Activated CD4-positive, alpha-beta T cell treated with anti-CD3 and anti-CD28 coated beads for 36 hours (primary cell): ENCODE measurements at regions of chrX and their contacts with region 1.

Region 1: DNA sequence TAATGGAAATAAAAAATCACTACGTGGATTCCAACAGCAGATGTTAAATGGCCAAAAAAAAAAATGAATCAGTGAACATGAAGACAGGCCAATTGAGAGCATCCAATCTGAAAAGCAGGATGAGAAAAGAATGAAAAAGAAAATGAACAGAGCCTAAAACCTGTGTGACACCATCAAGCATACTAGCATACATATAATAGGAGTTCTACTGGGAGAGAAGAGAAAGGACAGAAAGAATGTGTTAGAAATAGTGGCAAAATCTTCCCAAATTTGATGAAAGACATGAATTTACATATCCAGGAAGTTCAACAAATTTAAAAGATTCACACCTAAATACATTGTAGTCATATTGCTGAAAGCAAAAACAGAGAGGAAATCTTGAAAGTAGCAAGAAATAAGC is 76.4 kb downstream of the CCDC160 start:
- DNase-seq: no peak
- ATAC-seq: no peak
- H3K4me3 Mint-ChIP-seq: no peak overlapping the region
- H3K27ac Mint-ChIP-seq: no peak overlapping the region
- H3K4me1 Mint-ChIP-seq: no peaks in the 10 kb centered on the region
- H3K27me3 Mint-ChIP-seq: no peaks in the 10 kb centered on the region

Region 2: GRCh38 chrX:134246282-134246681 is 67.1 kb before region 1 on chrX:
- CTCF ChIA-PET with region 1: no interaction called
- POLR2A ChIA-PET with region 1: no interaction called
- intact Hi-C with region 1: no loop called
- DNase-seq: no peak
- ATAC-seq: no peak
- H3K4me3 Mint-ChIP-seq: no peak overlapping the region
- H3K27ac Mint-ChIP-seq: no peak overlapping the region
- H3K4me1 Mint-ChIP-seq: peaks cover 7% of the 10 kb centered on the region
- H3K27me3 Mint-ChIP-seq: no peaks in the 10 kb centered on the region

Region 3: DNA sequence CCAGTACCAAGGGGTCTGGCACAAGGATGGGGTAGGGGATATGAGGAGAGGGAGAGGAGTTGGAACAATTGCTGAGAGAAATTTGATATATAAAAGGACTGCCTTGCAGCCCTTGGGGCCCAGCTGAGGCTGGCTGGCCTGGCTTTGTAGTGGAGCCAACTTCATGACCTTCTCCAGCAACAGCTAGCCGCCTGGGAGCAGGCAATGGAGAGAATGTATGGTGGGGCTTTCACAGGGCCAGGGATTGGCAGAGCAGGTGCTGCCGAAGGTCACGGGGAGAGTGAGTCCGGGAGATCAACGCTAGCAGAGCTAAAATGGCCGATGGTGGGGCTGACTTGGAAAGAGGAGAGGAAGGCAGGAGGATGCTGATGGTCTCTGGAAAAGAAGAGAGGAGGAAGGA is 557.0 kb after region 1 on chrX:
- CTCF ChIA-PET with region 1: no interaction called
- POLR2A ChIA-PET with region 1: no interaction called
- intact Hi-C with region 1: loop called in 1 of 2 experiments (anchors 5 kb)
- DNase-seq: no peak
- ATAC-seq: no peak
- H3K4me3 Mint-ChIP-seq: no peak overlapping the region
- H3K27ac Mint-ChIP-seq: no peak overlapping the region
- H3K4me1 Mint-ChIP-seq: no peaks in the 10 kb centered on the region
- H3K27me3 Mint-ChIP-seq: no peaks in the 10 kb centered on the region